ENCODE measurements at regions of chr2 and their contacts with region 1.

Region 1: GRCh38 chr2:126527836-126528507 is 128.0 kb upstream of the GYPC start:
- DNase-seq: peak; percentile 29 to 43
- H3K4me3 ChIP-seq: no peak overlapping the region
- H3K27ac ChIP-seq: no peak overlapping the region
- H3K4me1 ChIP-seq: no peaks in the 10 kb centered on the region
- H3K27me3 ChIP-seq: no peaks in the 10 kb centered on the region
- CTCF ChIP-seq: peak; percentile 68

Region 2: GRCh38 chr2:126145752-126146151 is 382.2 kb before region 1 on chr2:
- CTCF ChIA-PET with region 1: no interaction called
- POLR2A ChIA-PET with region 1: no interaction called
- intact Hi-C with region 1: no loop called
- DNase-seq: no peak
- H3K4me3 ChIP-seq: no peak overlapping the region
- H3K27ac ChIP-seq: no peak overlapping the region
- H3K4me1 ChIP-seq: no peaks in the 10 kb centered on the region
- H3K27me3 ChIP-seq: no peaks in the 10 kb centered on the region
- CTCF ChIP-seq: no peak

Region 3: DNA sequence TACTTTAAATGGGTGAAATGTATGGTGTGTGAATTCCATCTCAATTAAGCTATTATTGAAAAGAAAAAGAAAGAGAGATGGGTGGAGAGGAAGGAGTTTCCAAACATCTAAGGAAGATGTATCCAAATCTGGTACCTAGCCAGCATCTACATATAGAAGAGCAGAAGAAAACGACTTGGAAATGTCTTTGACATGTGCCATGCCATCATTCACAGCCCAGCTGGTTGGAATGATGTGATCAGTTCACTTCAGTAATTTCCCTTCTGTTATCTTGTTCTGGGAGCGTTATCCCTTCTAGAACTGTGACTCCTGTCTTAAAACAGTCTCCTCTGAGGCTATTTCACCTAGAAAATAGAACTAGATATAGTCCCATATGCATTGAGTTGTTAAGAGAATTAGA is 184.8 kb before region 1 on chr2:
- CTCF ChIA-PET with region 1: no interaction called
- POLR2A ChIA-PET with region 1: no interaction called
- intact Hi-C with region 1: no loop called
- DNase-seq: no peak
- H3K4me3 ChIP-seq: no peak overlapping the region
- H3K27ac ChIP-seq: no peak overlapping the region
- H3K4me1 ChIP-seq: no peaks in the 10 kb centered on the region
- H3K27me3 ChIP-seq: no peaks in the 10 kb centered on the region
- CTCF ChIP-seq: no peak

Region 4: GRCh38 chr2:127174136-127174535 is 646.2 kb after region 1 on chr2:
- CTCF ChIA-PET with region 1: no interaction called
- POLR2A ChIA-PET with region 1: no interaction called
- intact Hi-C with region 1: loop called (anchors 5 kb)
- DNase-seq: peak; percentile 47 to 48
- H3K4me3 ChIP-seq: no peak overlapping the region
- H3K27ac ChIP-seq: no peak overlapping the region
- H3K4me1 ChIP-seq: peaks cover 24% of the 10 kb centered on the region
- H3K27me3 ChIP-seq: no peaks in the 10 kb centered on the region
- CTCF ChIP-seq: peak; percentile 70